Activated CD8-positive, alpha-beta memory T cell treated with anti-CD3 and anti-CD28 coated beads, Interleukin-2, amount 10 ng/mL, durations not matched to agents 7 days and 5 days (primary cell): ENCODE measurements at regions of chr11 and their contacts with region 1.

Region 1: DNA sequence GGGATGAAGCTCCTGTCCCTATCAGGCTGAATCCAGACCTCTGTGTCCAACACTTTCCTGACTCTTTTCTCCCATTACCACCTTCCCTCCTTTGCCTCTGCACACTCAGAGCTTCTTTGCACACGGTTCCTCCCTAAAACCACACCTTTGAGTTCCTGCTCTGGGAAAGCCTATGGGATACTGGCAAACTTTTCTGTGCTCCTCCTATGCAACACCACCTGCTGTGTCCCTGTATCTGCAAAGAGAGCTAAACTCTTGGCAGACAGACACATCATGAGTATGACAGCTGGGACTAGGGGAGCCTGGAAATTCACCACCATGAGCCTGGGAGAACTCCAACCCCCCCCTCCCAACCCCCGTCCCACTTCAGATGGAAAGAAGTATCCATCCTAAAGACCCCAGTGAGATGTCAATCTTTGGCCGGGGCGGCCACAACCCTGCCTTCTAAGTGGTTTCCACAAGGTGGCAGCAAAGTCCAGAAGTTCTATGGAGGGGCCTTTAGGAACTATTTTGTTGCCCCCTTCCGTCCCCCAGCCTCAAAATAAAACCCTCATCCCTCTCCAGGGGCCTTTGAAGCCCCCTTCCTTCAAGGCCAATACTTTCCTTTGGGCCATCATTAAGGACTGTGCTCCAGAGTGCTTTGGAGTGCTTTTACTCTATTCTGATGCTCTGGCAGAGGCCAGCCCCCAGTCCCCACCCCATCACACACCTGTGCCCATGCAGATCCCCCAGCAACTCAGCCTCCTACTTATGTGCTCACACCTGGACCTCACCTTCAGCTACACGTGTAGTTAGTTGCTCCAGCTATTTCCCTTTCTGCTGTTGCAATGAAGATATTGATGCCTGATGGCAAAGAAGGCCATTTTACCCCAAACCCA is 19.4 kb downstream of the HTR3A start:
- DNase-seq: no peak
- ATAC-seq: peak; percentile 47
- H3K4me3 Mint-ChIP-seq: no peak overlapping the region
- H3K27ac Mint-ChIP-seq: no peak overlapping the region
- H3K4me1 Mint-ChIP-seq: no peaks in the 10 kb centered on the region
- H3K27me3 Mint-ChIP-seq: peaks cover 24% of the 10 kb centered on the region

Region 2: GRCh38 chr11:113896156-113896879 is 98.0 kb before region 1 on chr11:
- CTCF ChIA-PET with region 1: interaction called, 20 read pairs
- DNase-seq: peak; percentile 55
- ATAC-seq: peak; percentile 75
- H3K4me3 Mint-ChIP-seq: no peak overlapping the region
- H3K27ac Mint-ChIP-seq: no peak overlapping the region
- H3K4me1 Mint-ChIP-seq: peaks cover 6% of the 10 kb centered on the region
- H3K27me3 Mint-ChIP-seq: peaks cover 3% of the 10 kb centered on the region

Region 3: GRCh38 chr11:114270531-114271270 is 276.4 kb after region 1 on chr11:
- CTCF ChIA-PET with region 1: interaction called, 10 read pairs
- DNase-seq: no peak
- ATAC-seq: no peak
- H3K4me3 Mint-ChIP-seq: no peak overlapping the region
- H3K27ac Mint-ChIP-seq: no peak overlapping the region
- H3K4me1 Mint-ChIP-seq: no peaks in the 10 kb centered on the region
- H3K27me3 Mint-ChIP-seq: peaks cover 51% of the 10 kb centered on the region